Endothelial cell of umbilical vein (primary cell): ENCODE measurements at regions of chr1 and their contacts with region 1.

Region 1: DNA sequence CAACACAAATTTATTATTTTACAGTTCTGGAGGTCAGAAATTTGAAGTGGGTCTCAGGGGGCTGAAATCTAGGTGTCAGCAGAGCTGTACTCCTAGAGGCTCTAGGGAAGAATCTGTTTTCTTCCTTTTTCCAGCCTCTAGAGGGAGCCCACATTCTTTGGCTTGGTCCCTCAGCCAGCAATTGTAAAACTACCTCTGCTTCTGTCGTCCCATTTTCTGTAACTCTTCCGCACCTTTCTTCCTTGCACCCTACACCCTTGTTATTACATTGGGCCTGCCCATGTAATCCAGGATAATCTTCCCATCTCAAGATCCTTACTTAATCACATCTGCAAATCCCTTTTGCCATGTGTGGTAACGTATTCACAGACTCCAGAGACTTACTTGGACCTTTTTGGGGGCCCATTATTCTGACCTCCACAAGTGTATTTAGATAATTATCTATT is 24.8 kb upstream of the THEM4 start:
- DNase-seq: peak; percentile 71
- H3K4me3 ChIP-seq: no peak overlapping the region
- H3K27ac ChIP-seq: no peak overlapping the region
- H3K4me1 ChIP-seq: peaks cover 6% of the 10 kb centered on the region
- H3K27me3 ChIP-seq: no peaks in the 10 kb centered on the region
- CTCF ChIP-seq: peak; percentile 70 to 77
- POLR2A ChIP-seq: no peak

Region 2: DNA sequence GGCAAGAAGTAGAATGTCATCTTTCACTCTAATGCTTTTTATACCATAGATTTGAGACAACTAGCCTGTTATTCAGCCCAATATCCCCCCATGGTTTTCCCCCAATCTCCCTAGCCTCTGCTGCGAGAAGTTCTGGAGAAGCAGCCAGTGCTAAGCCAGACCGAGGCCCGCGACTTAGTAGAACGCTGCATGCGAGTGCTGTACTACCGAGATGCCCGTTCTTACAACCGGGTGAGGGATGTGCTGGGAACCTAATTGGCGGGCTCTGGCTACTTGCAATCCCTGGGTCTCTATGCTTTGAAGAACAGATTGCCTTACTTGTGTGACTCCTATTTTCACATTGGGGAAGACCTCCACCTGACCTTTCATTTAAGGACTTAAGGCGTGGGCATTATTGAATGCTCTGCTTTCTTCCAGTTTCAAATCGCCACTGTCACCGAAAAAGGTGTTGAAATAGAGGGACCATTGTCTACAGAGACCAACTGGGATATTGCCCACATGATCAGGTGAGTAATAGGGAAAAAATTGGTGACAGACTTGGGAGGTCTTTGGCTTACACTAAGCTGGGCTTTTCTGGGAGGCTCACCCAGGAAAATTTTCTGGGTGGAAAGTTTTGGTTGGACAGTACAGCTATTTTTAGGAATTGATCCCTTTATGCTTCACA is 532.8 kb before region 1 on chr1:
- CTCF ChIA-PET with region 1: no interaction called
- POLR2A ChIA-PET with region 1: no interaction called
- dilution Hi-C with region 1: no loop called
- intact Hi-C with region 1: no loop called
- DNase-seq: no peak
- H3K4me3 ChIP-seq: no peak overlapping the region
- H3K27ac ChIP-seq: no peak overlapping the region
- H3K4me1 ChIP-seq: peaks cover 6% of the 10 kb centered on the region
- H3K27me3 ChIP-seq: no peaks in the 10 kb centered on the region
- CTCF ChIP-seq: no peak
- POLR2A ChIP-seq: peak; percentile 36

Region 3: DNA sequence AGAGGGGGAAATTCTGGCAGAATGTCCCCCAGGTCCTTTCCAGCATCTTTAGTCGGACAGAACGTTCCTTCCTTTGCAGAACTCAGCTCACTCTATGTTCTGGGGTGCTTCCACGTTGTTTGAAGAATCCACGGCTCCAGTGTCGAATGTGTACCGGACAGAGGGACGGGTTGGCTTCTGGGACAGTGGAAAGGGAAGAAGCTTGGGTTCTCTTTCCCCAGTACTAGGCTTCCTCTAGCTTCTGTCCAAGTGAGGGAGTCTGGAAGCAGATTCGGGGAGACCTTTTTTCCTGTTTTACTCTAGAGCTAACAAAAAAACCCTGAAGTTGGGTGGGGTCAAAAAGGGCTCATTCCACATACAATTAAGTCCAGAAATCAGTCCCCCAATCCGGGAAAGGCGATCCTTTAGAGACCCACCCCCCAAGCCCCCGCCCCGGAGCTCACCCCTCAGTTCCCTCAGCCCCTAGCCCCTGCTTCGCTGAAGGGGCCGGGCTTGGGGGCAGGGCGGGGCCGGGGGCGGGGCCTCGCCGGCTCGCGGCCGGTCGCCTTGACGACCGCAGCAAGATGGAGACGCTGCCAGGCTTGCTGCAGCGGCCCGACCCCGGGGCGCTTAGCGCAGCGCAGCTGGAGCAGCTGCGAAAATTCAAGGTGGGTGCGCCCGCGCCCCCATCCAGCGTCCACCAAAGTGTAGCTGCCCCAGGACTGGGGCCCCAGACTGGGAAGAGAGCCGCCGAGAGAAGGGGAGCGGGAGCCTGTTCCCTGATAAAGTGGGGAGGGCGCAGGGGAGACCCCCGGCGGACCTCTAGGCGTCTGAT is 212.9 kb before region 1 on chr1 and contains the start of gene RIIAD1:
- CTCF ChIA-PET with region 1: no interaction called
- POLR2A ChIA-PET with region 1: no interaction called
- dilution Hi-C with region 1: no loop called
- intact Hi-C with region 1: no loop called
- DNase-seq: no peak
- H3K4me3 ChIP-seq: peak within 1 kb of the TSS in 1 of 3 experiments; percentile 16
- H3K27ac ChIP-seq: no peak within 1 kb of the TSS
- H3K4me1 ChIP-seq: peaks cover 4% of the 10 kb centered on the region
- H3K27me3 ChIP-seq: peaks cover 56 to 73% of the 10 kb centered on the region in 2 experiments
- CTCF ChIP-seq: no peak
- POLR2A ChIP-seq: no peak
- total RNA-seq, gene RIIAD1: not detected in 2 replicates

Region 4: GRCh38 chr1:151920149-151920548 is 13.9 kb before region 1 on chr1:
- CTCF ChIA-PET with region 1: interaction called, 10 read pairs
- POLR2A ChIA-PET with region 1: no interaction called
- dilution Hi-C with region 1: no loop called
- intact Hi-C with region 1: no loop called
- DNase-seq: no peak
- H3K4me3 ChIP-seq: no peak overlapping the region
- H3K27ac ChIP-seq: no peak overlapping the region
- H3K4me1 ChIP-seq: no peaks in the 10 kb centered on the region
- H3K27me3 ChIP-seq: peaks cover 2 to 5% of the 10 kb centered on the region in 2 experiments
- CTCF ChIP-seq: no peak
- POLR2A ChIP-seq: no peak

Region 5: DNA sequence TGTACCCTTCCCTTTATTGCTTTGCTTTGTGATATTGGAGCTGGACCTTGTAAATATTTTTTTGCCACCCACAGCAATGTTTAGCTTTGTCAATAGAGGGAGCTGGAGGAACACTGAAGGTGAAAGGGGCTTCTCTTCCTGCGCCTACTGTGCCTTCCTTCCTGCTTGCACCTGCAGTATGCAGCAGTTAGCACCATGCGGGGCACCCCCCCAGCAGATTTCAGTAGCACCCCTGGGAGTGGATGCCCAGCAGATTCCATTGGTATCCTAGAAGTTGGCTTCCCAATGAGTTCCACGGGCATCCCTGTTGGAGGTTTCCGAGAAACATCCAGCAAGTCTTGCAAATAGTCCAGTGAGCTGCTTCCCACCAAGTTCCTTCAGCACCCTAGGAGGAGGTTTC is 34.0 kb after region 1 on chr1:
- CTCF ChIA-PET with region 1: interaction called, 79 read pairs
- POLR2A ChIA-PET with region 1: no interaction called
- dilution Hi-C with region 1: no loop called
- intact Hi-C with region 1: loop called (anchors 1 kb)
- DNase-seq: peak; percentile 56
- H3K4me3 ChIP-seq: no peak overlapping the region
- H3K27ac ChIP-seq: no peak overlapping the region
- H3K4me1 ChIP-seq: peaks cover 21% of the 10 kb centered on the region
- H3K27me3 ChIP-seq: no peaks in the 10 kb centered on the region
- CTCF ChIP-seq: peak; percentile 55 to 60
- POLR2A ChIP-seq: no peak

Region 6: GRCh38 chr1:151993654-151994496 is 59.8 kb after region 1 on chr1 and contains the start of gene S100A10:
- CTCF ChIA-PET with region 1: interaction called, 572 read pairs
- POLR2A ChIA-PET with region 1: interaction called, 7 read pairs
- dilution Hi-C with region 1: no loop called
- intact Hi-C with region 1: loop called (anchors 1 kb)
- DNase-seq: peak; percentile 67
- H3K4me3 ChIP-seq: peak within 1 kb of the TSS; percentile 22 to 70 (median 67)
- H3K27ac ChIP-seq: peak within 1 kb of the TSS; percentile 83
- H3K4me1 ChIP-seq: peaks cover 44% of the 10 kb centered on the region
- H3K27me3 ChIP-seq: no peaks in the 10 kb centered on the region
- CTCF ChIP-seq: no peak
- POLR2A ChIP-seq: peak; percentile 87
- total RNA-seq, gene S100A10: 650 and 779 TPM in 2 replicates

Region 7: DNA sequence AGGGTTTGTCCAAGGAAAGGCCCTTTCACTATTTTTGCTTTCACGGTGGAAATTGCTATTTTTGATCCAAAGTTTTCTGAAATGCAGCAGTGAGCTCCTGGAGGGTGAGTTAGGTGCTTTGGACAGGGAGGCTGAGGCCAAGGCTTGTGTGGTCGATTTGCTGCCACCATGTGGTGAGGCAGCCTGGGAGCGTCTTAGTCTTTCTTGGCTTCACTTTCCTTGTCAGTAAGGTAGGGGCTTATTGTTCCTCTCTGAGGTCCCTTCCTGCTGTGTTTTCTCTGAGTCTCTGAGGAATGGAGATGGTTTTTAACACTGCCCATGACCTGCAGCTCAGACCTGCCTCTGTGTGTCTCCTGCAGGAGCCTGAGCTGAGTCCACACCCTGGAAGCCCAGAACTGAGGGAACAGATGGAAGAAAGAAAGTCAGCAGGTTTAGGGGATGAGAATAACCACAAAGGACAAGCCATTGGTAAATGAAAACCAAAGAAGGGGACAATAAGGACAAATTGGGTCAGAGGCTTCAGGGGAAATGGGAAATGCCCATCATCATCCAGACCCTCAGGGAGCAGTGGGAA is 79.7 kb after region 1 on chr1:
- CTCF ChIA-PET with region 1: interaction called, 53 read pairs
- POLR2A ChIA-PET with region 1: no interaction called
- dilution Hi-C with region 1: no loop called
- intact Hi-C with region 1: loop called (anchors 1 kb)
- DNase-seq: peak; percentile 48
- H3K4me3 ChIP-seq: no peak overlapping the region
- H3K27ac ChIP-seq: no peak overlapping the region
- H3K4me1 ChIP-seq: no peaks in the 10 kb centered on the region
- H3K27me3 ChIP-seq: peaks cover 10 to 36% of the 10 kb centered on the region in 2 experiments
- CTCF ChIP-seq: peak; percentile 63 to 81
- POLR2A ChIP-seq: no peak

Region 8: GRCh38 chr1:152189657-152190442 is 255.8 kb after region 1 on chr1:
- CTCF ChIA-PET with region 1: no interaction called
- POLR2A ChIA-PET with region 1: no interaction called
- dilution Hi-C with region 1: no loop called
- intact Hi-C with region 1: loop called (anchors 10 kb)
- DNase-seq: peak; percentile 65
- H3K4me3 ChIP-seq: peak overlapping the region in 2 of 3 experiments; percentile 43 to 48
- H3K27ac ChIP-seq: no peak overlapping the region
- H3K4me1 ChIP-seq: peaks cover 5% of the 10 kb centered on the region
- H3K27me3 ChIP-seq: peaks cover 0 to 4% of the 10 kb centered on the region in 2 experiments
- CTCF ChIP-seq: peak; percentile 65 to 72
- POLR2A ChIP-seq: no peak